Body of pancreas (tissue), 4 donors: ENCODE measurements at regions of chr17 and their contacts with region 1.

Region 1: GRCh38 chr17:17919169-17920107 is 52.8 kb downstream of the TOM1L2 start:
- DNase-seq: peak; percentile 77 to 81 (median 80)
- ATAC-seq: peak; percentile 72
- H3K4me3 ChIP-seq: no peak overlapping the region
- H3K27ac ChIP-seq: no peak overlapping the region
- H3K4me1 ChIP-seq: peaks cover 38% of the 10 kb centered on the region
- H3K27me3 ChIP-seq: no peaks in the 10 kb centered on the region
- CTCF ChIP-seq: peak; percentile 54 to 87 (median 84)
- POLR2A ChIP-seq: no peak

Region 2: GRCh38 chr17:17675925-17676534 is 243.4 kb before region 1 on chr17:
- intact Hi-C with region 1: loop called (anchors 5 kb)
- DNase-seq: no peak
- ATAC-seq: peak; percentile 31
- H3K4me3 ChIP-seq: no peak overlapping the region
- H3K27ac ChIP-seq: no peak overlapping the region
- H3K4me1 ChIP-seq: peaks cover 6% of the 10 kb centered on the region
- H3K27me3 ChIP-seq: no peaks in the 10 kb centered on the region
- CTCF ChIP-seq: no peak
- POLR2A ChIP-seq: no peak

Region 3: DNA sequence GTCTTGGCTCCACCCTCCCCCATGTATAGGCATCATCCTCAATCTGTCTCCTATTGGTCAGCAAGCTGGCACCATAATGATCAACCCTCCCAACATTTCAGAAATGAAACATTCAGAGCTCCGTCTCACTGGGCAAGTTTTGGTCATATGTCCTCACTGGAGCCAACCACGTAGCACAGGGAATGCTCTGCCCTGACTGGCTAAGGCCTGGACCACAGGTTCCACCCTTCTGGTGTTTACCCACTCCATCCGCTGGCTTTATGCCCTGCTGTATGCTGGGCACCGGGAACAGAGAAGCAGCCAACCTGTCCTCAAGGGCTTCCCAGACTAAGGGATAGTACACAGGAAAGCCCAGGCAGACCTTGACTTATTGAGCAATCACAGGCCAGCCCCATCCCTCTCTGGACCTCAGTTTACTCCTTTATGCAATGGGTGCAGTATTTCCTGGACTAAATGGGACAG is 209.6 kb after region 1 on chr17:
- intact Hi-C with region 1: no loop called
- DNase-seq: peak in 3 of 4 donors; percentile 22 to 60 (median 22)
- ATAC-seq: no peak
- H3K4me3 ChIP-seq: no peak overlapping the region
- H3K27ac ChIP-seq: no peak overlapping the region
- H3K4me1 ChIP-seq: no peaks in the 10 kb centered on the region
- H3K27me3 ChIP-seq: no peaks in the 10 kb centered on the region
- CTCF ChIP-seq: no peak
- POLR2A ChIP-seq: no peak